GM12878 (cell line): ENCODE measurements at regions of chr7 and their contacts with region 1.

Region 1: GRCh38 chr7:82247814-82248433 is 195.7 kb downstream of the CACNA2D1 start:
- DNase-seq: no peak
- ATAC-seq: peak; percentile 84
- H3K4me3 ChIP-seq: no peak overlapping the region
- H3K27ac ChIP-seq: no peak overlapping the region
- H3K4me1 ChIP-seq: no peaks in the 10 kb centered on the region
- H3K27me3 ChIP-seq: no peaks in the 10 kb centered on the region
- CTCF ChIP-seq: peak; percentile 33 to 51 (median 38)
- EP300 ChIP-seq: no peak
- POLR2A ChIP-seq: no peak
- RAD21 ChIP-seq: 0 out of 2 replicates have a peak, but pooled peaks have one; percentile 10

Region 2: GRCh38 chr7:82234457-82235049 is 13.4 kb before region 1 on chr7:
- CTCF ChIA-PET with region 1: interaction called, 12 read pairs
- POLR2A ChIA-PET with region 1: no interaction called
- RAD21 ChIA-PET with region 1: interaction called, 3 read pairs
- SMC1A ChIA-PET with region 1: interaction called, 5 read pairs
- in situ Hi-C with region 1: no loop called
- intact Hi-C with region 1: no loop called
- DNase-seq: no peak
- ATAC-seq: peak; percentile 60
- H3K4me3 ChIP-seq: no peak overlapping the region
- H3K27ac ChIP-seq: no peak overlapping the region
- H3K4me1 ChIP-seq: no peaks in the 10 kb centered on the region
- H3K27me3 ChIP-seq: no peaks in the 10 kb centered on the region
- CTCF ChIP-seq: peak; percentile 34 to 51 (median 49); a peak in 5 of 6 replicates
- EP300 ChIP-seq: no peak
- POLR2A ChIP-seq: no peak
- RAD21 ChIP-seq: peak; percentile 69

Region 3: DNA sequence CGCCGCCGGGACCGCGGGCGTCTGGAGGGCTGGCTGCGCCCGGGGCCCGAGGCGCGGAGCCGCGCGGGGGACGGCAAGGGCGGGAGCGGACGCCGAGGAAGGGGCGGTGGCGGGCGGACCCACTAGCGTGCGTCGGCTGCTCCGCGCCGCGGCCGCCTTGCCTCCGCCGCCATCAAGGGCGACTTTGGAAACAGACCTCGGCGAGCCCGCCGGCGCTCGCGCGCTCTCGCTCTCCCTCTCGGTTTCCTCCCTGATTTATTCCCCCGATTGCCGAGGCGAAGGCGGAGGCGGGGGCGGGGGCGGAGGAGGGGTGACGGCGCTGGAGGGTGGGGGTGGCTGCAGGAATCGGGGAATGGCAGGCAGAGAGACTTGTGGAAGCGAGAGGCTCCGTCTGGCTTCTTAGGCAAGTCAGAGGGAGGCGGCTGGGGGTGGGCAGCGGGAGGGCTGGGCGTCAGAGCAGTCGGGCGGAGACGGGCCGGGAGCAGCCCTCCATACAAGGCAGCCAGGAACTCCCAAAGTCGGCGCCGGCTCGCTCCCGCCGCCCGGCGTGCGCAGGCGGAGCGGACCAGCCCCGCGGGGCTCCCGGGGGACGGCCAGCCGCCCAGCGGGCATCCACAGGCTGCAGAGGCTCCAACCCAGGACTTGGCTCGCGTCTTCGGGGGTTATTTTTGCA is 195.8 kb after region 1 on chr7 and contains the start of gene CACNA2D1:
- CTCF ChIA-PET with region 1: no interaction called
- POLR2A ChIA-PET with region 1: no interaction called
- RAD21 ChIA-PET with region 1: no interaction called
- SMC1A ChIA-PET with region 1: no interaction called
- in situ Hi-C with region 1: no loop called
- intact Hi-C with region 1: no loop called
- DNase-seq: no peak
- ATAC-seq: peak; percentile 62
- H3K4me3 ChIP-seq: no peak within 1 kb of the TSS
- H3K27ac ChIP-seq: no peak within 1 kb of the TSS
- H3K4me1 ChIP-seq: no peaks in the 10 kb centered on the region
- H3K27me3 ChIP-seq: peaks cover 5 to 11% of the 10 kb centered on the region in 2 experiments
- CTCF ChIP-seq: no peak; a peak in 1 of 6 replicates
- EP300 ChIP-seq: no peak
- POLR2A ChIP-seq: no peak
- RAD21 ChIP-seq: no peak
- polyA plus RNA-seq, gene CACNA2D1: 0.14 to 0.15 TPM